HCT116 (cell line): ENCODE measurements at regions of chr12 and their contacts with region 1.

Region 1: GRCh38 chr12:25250744-25251730 is at the start of gene KRAS:
- DNase-seq: peak; percentile 88
- ATAC-seq: peak; percentile 92
- H3K4me3 ChIP-seq: peak within 1 kb of the TSS; percentile 84 to 93
- H3K27ac ChIP-seq: peak within 1 kb of the TSS; percentile 61
- H3K4me1 ChIP-seq: peaks cover 0 to 16% of the 10 kb centered on the region in 2 experiments; a peak in 3 of 4 replicates
- H3K27me3 ChIP-seq: no peaks in the 10 kb centered on the region
- CTCF ChIP-seq: no peak
- POLR2A ChIP-seq: no peak
- RAD21 ChIP-seq: no peak
- total RNA-seq, gene KRAS: 37.5 TPM

Region 2: DNA sequence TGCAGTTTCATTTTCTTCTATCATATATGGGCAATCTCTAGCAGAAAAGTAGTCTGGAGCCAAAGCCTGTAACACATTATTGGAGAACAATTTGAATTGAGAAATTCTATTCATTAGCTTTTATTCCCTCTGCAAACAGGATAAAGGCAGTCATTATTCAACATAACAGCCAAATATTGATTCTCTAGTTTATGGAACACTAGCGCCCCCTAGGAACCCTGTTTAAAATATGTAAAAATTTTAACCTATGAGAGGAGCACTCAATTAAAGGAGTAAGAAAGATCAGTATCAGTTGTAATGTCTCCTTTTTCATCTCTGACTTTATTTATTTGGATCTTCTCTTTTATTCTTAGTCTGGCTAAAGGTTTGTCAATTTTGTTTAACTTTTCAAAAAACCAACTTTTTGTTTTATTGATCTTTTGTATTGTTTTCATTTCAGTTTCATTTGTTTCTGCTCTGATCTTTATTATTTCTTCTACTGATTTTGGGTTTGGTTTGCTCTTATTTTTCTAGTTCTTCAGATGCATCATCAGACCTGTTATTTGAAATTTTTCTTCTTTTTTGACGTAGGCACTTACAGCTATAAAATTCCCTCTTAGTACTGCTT is 306.9 kb after region 1 on chr12:
- CTCF ChIA-PET with region 1: no interaction called
- POLR2A ChIA-PET with region 1: no interaction called
- RAD21 ChIA-PET with region 1: no interaction called
- intact Hi-C with region 1: loop called (anchors 10 kb)
- DNase-seq: peak; percentile 54
- ATAC-seq: peak; percentile 49
- H3K4me3 ChIP-seq: no peak overlapping the region
- H3K27ac ChIP-seq: no peak overlapping the region
- H3K4me1 ChIP-seq: no peaks in the 10 kb centered on the region
- H3K27me3 ChIP-seq: no peaks in the 10 kb centered on the region
- CTCF ChIP-seq: peak; percentile 60 to 73 (median 60); a peak in 5 of 6 replicates
- POLR2A ChIP-seq: no peak
- RAD21 ChIP-seq: peak; percentile 73

Region 3: GRCh38 chr12:26044012-26044383 is 793.0 kb after region 1 on chr12:
- CTCF ChIA-PET with region 1: no interaction called
- POLR2A ChIA-PET with region 1: no interaction called
- RAD21 ChIA-PET with region 1: no interaction called
- intact Hi-C with region 1: loop called (anchors 10 kb)
- DNase-seq: no peak
- ATAC-seq: no peak
- H3K4me3 ChIP-seq: no peak overlapping the region
- H3K27ac ChIP-seq: no peak overlapping the region
- H3K4me1 ChIP-seq: peaks cover 5 to 10% of the 10 kb centered on the region in 2 experiments; a peak in 3 of 4 replicates
- H3K27me3 ChIP-seq: no peaks in the 10 kb centered on the region
- CTCF ChIP-seq: no peak
- POLR2A ChIP-seq: no peak
- RAD21 ChIP-seq: no peak